Mammary epithelial cell (primary cell): ENCODE measurements at regions of chr5 and their contacts with region 1.

Region 1: DNA sequence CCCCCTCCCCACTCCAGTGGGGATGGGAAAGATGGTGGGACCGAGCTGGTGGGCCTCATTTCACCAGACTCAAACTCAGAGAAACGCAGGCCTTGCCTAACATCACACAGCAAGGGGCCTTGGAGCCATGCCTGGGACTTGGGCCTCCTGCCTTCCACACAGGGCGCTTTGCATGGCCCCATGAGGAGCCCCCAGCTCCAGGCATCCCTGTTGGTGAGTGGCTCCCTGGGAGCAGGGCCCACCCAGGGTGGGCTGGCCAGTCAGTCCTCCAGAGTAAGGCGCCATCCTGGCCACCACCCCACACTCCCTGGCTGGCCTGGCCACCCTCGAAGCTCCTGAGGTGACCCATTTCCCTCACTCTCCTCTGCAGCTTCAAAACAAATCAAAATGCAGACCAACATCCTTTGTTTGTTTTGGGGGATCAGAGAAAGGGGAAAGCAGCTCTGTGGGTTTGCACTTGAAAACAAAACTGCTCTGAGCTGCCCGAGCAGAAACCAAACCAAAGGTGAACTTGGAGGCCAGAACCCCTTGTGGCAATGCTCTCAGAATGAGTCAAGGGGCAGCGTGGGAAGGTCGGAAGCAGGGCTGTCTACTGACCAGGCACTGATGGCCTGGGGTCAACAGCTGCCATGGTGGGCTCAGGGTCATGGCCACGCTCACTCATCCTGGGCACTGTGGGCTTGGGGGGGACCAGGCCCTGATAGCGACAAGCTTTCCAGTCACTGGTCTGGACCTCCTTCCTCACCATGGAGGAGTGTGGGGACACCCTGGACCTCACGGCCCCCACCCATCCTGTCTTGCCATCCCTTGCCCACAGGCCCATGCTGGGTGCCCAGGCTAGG is 37.0 kb upstream of the VDAC1 start:
- DNase-seq: no peak
- H3K4me3 ChIP-seq: no peak overlapping the region
- H3K27ac ChIP-seq: no peak overlapping the region
- H3K4me1 ChIP-seq: no peaks in the 10 kb centered on the region
- H3K27me3 ChIP-seq: no peaks in the 10 kb centered on the region
- CTCF ChIP-seq: no peak

Region 2: DNA sequence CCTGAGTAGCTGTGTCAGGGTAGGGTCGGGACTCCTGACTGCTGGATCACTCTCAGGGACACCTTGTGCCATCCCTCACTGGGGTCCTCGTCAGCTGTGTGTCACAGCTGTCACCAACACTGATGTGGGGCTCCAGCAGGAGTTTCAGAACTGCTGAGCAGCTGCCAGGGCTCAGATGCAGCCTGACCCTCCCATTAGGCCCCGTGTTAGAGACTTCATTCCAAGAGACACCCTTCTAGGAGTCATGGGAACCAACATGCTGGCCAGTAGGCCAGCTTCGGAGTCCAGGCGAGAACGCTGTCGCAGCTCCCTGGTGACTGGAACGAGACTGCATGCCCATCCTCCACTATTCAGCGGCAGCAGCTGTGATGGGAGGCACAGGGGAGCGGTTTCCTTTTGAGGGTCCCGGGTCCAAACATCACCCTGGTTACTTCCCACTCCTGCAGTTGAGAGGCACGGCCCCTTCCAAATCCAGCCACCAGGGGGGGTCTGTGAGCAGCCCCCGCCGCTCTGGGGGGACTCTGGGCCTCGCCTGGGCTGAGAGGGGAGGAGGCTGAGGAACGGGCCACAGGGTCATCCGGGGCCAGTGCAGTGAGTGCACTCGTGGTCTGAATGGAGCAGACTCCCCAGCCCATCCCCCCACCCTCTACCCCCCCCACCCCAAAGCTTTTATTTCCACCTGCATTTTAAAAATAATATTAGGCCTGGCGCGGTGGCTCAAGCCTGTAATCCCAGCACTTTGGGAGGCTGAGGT is 60.1 kb after region 1 on chr5:
- CTCF ChIA-PET with region 1: no interaction called
- dilution Hi-C with region 1: no loop called
- in situ Hi-C with region 1: no loop called
- intact Hi-C with region 1: loop called (anchors 1 kb)
- DNase-seq: no peak
- H3K4me3 ChIP-seq: no peak overlapping the region
- H3K27ac ChIP-seq: no peak overlapping the region
- H3K4me1 ChIP-seq: peaks cover 9% of the 10 kb centered on the region
- H3K27me3 ChIP-seq: no peaks in the 10 kb centered on the region
- CTCF ChIP-seq: peak; percentile 72 to 93

Region 3: DNA sequence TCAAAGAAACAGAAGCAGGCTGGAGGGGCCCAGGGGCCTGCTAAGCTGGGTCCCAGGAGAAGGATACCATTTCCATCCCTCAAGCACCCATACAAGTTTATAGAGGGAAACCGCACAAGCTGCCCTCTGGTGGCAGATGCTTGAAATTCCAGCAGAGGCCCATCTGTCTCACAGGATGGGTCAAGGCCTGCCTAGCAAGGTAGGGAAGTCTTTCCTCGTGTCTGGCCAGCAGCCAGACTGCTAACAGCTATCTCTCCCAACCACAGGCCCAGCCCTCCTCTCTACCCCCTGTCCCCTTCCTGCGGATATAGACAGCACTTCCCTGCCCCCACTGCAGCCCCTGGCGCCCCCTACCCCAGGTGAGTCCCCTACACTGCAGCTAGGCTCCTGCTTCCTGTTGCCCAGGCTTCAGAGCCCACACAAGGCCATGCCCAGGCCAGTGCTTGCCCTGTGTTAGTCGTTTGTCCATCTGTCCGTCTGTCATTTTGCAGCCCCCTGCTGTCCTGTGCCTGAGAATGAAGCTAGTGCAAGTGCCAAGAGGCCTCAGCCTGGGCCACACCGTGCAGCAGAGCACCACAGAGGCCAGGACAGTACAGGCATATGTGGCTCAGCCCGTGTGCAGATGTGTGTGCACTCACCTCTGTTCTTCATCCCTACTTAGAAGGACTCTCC is 98.9 kb after region 1 on chr5:
- CTCF ChIA-PET with region 1: interaction called, 39 read pairs
- dilution Hi-C with region 1: no loop called
- in situ Hi-C with region 1: loop called in 1 of 2 experiments (anchors 5 kb)
- intact Hi-C with region 1: loop called (anchors 1 kb)
- DNase-seq: peak; percentile 86
- H3K4me3 ChIP-seq: no peak overlapping the region
- H3K27ac ChIP-seq: no peak overlapping the region
- H3K4me1 ChIP-seq: peaks cover 36% of the 10 kb centered on the region
- H3K27me3 ChIP-seq: no peaks in the 10 kb centered on the region
- CTCF ChIP-seq: peak; percentile 85 to 90

Region 4: GRCh38 chr5:134289509-134290113 is 247.8 kb after region 1 on chr5:
- CTCF ChIA-PET with region 1: no interaction called
- dilution Hi-C with region 1: no loop called
- in situ Hi-C with region 1: loop called in 1 of 2 experiments (anchors 25 kb)
- intact Hi-C with region 1: loop called (anchors 1 kb)
- DNase-seq: peak; percentile 52
- H3K4me3 ChIP-seq: no peak overlapping the region
- H3K27ac ChIP-seq: no peak overlapping the region
- H3K4me1 ChIP-seq: no peaks in the 10 kb centered on the region
- H3K27me3 ChIP-seq: no peaks in the 10 kb centered on the region
- CTCF ChIP-seq: peak; percentile 76 to 78